Panc1 (cell line): ENCODE measurements at regions of chr2 and their contacts with region 1.

Region 1: GRCh38 chr2:32553829-32554432 is 73.9 kb upstream of the TTC27 start:
- DNase-seq: no peak
- ATAC-seq: peak; percentile 88
- H3K4me3 ChIP-seq: no peak overlapping the region
- H3K27ac ChIP-seq: no peak overlapping the region
- H3K4me1 ChIP-seq: no peaks in the 10 kb centered on the region
- H3K27me3 ChIP-seq: no peaks in the 10 kb centered on the region
- CTCF ChIP-seq: peak; percentile 74; the same call in 1 of the 2 replicates

Region 2: DNA sequence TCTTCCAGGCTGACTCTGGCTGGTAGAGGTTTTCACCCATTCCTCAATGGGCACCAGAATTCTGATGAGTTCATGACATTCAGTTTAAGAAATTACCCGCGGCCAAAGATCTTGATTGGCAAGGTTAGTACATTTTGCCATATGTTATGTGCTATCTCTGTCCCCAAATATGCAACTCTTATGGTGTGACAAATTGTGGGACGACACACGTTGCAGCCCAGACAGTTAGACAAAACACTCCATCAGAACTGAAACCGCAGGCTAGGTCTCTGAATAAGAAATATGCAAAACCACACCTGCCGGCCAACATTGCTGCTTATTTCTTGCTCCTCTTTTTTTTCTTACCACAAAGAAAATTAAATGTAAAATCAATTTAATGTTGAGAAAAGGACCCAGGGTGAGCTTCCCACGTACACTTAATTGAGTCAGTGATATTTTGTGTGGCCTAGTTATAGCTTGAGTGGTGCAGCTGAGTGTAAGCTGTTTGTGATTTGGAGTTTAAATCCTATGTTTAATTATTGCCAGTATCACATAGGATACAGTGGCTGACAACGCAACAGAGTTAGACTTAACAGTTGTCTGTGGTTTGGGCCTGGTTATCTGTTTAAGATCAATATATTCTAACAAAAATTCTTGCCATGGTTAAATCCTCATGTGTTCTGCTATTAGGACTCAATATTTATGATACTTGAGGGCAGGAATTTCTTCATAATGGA is 357.1 kb after region 1 on chr2:
- CTCF ChIA-PET with region 1: no interaction called
- POLR2A ChIA-PET with region 1: no interaction called
- in situ Hi-C with region 1: no loop called
- intact Hi-C with region 1: no loop called
- DNase-seq: no peak
- ATAC-seq: no peak
- H3K4me3 ChIP-seq: no peak overlapping the region
- H3K27ac ChIP-seq: no peak overlapping the region
- H3K4me1 ChIP-seq: no peaks in the 10 kb centered on the region
- H3K27me3 ChIP-seq: peaks cover 5% of the 10 kb centered on the region; the same call in 1 of the 2 replicates
- CTCF ChIP-seq: no peak

Region 3: GRCh38 chr2:33395655-33396249 is 841.8 kb after region 1 on chr2:
- CTCF ChIA-PET with region 1: no interaction called
- POLR2A ChIA-PET with region 1: no interaction called
- in situ Hi-C with region 1: no loop called
- intact Hi-C with region 1: loop called (anchors 10 kb)
- DNase-seq: no peak
- ATAC-seq: peak; percentile 83
- H3K4me3 ChIP-seq: no peak overlapping the region
- H3K27ac ChIP-seq: no peak overlapping the region
- H3K4me1 ChIP-seq: no peaks in the 10 kb centered on the region
- H3K27me3 ChIP-seq: no peaks in the 10 kb centered on the region
- CTCF ChIP-seq: peak; percentile 81